Calu3 (cell line): ENCODE measurements at regions of chr14 and their contacts with region 1.

Region 1: GRCh38 chr14:66476964-66477363 is 9.2 kb upstream of the CCDC196 start:
- DNase-seq: no peak
- H3K4me3 Mint-ChIP-seq: no peak overlapping the region
- H3K27ac Mint-ChIP-seq: no peak overlapping the region
- H3K4me1 Mint-ChIP-seq: no peaks in the 10 kb centered on the region
- H3K27me3 Mint-ChIP-seq: no peaks in the 10 kb centered on the region
- CTCF ChIP-seq: no peak

Region 2: DNA sequence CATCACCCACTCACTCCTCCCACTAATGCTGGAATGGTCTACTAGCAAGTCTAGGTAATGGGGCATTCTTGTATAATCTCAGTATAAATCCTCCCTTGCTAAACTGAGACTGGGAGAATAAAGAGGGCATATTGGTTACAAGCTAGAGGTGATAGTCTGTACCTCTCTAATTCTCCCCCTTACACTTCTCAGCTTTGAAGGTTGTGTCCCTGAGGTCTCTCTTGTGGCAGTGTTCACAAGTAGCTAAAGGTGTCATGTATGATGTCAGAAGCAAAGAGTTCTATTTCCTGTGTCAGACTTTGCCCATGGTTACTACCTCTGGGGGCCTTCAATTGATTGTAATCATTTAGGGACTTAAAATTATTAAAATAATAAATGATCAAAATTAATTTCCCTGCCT is 17.4 kb before region 1 on chr14:
- CTCF ChIA-PET with region 1: no interaction called
- intact Hi-C with region 1: loop called (anchors 1 kb)
- DNase-seq: no peak
- H3K4me3 Mint-ChIP-seq: no peak overlapping the region
- H3K27ac Mint-ChIP-seq: no peak overlapping the region
- H3K4me1 Mint-ChIP-seq: no peaks in the 10 kb centered on the region
- H3K27me3 Mint-ChIP-seq: no peaks in the 10 kb centered on the region
- CTCF ChIP-seq: no peak

Region 3: DNA sequence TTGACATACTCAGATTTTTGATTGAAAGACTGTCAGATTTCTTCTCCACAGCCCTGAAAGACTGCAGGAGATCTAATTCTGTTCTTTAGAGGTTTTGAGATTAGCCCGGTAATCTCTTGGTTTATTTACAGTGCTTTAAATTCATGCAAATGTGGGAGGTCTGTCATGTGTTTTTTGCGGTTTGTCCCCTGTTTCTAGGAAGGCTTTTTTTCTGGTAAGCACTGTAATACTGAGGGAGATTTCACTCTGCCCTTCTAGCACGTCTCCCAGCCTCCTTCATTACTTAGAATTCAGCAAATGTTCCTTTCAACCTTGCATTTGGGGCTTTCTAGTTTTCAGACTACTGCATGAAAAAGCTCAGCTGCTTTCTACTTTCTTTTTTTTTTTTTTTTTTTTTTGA is 62.1 kb after region 1 on chr14:
- CTCF ChIA-PET with region 1: no interaction called
- intact Hi-C with region 1: no loop called
- DNase-seq: no peak
- H3K4me3 Mint-ChIP-seq: no peak overlapping the region
- H3K27ac Mint-ChIP-seq: no peak overlapping the region
- H3K4me1 Mint-ChIP-seq: peaks cover 7% of the 10 kb centered on the region
- H3K27me3 Mint-ChIP-seq: no peaks in the 10 kb centered on the region
- CTCF ChIP-seq: no peak